ENCODE measurements at regions of chrX and their contacts with region 1.

Region 1: DNA sequence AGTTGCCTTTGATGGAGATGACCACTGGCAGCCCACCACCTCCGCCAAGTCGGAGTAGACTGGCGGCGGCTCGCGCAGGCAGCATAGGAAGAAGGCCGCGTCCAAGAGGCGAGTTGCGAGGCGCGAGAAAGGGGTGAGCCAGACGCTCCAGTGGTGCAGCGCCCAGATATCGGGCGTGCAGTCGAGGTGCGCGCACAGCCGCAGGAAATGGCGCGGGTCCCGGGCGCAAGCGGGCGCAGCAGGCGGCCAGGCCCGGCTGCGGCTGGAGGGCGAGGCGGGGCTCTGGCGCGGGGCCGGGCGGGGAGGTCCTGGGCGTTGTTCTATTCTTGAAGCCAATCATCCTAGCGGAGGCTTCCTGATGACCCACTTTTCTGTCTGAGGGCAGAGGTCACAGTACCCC is 13.2 kb upstream of the PGRMC1 start:
- DNase-seq: no peak
- ATAC-seq: no peak
- H3K4me3 Mint-ChIP-seq: no peak overlapping the region
- H3K27ac Mint-ChIP-seq: no peak overlapping the region
- H3K4me1 Mint-ChIP-seq: no peaks in the 10 kb centered on the region
- H3K27me3 Mint-ChIP-seq: peaks cover 11% of the 10 kb centered on the region

Region 2: GRCh38 chrX:119118780-119119395 is 104.0 kb before region 1 on chrX:
- CTCF ChIA-PET with region 1: interaction called, 10 read pairs
- POLR2A ChIA-PET with region 1: no interaction called
- intact Hi-C with region 1: loop called (anchors 1 to 5 kb)
- DNase-seq: peak; percentile 64
- ATAC-seq: peak; percentile 83
- H3K4me3 Mint-ChIP-seq: no peak overlapping the region
- H3K27ac Mint-ChIP-seq: no peak overlapping the region
- H3K4me1 Mint-ChIP-seq: no peaks in the 10 kb centered on the region
- H3K27me3 Mint-ChIP-seq: peaks cover 3% of the 10 kb centered on the region

Region 3: DNA sequence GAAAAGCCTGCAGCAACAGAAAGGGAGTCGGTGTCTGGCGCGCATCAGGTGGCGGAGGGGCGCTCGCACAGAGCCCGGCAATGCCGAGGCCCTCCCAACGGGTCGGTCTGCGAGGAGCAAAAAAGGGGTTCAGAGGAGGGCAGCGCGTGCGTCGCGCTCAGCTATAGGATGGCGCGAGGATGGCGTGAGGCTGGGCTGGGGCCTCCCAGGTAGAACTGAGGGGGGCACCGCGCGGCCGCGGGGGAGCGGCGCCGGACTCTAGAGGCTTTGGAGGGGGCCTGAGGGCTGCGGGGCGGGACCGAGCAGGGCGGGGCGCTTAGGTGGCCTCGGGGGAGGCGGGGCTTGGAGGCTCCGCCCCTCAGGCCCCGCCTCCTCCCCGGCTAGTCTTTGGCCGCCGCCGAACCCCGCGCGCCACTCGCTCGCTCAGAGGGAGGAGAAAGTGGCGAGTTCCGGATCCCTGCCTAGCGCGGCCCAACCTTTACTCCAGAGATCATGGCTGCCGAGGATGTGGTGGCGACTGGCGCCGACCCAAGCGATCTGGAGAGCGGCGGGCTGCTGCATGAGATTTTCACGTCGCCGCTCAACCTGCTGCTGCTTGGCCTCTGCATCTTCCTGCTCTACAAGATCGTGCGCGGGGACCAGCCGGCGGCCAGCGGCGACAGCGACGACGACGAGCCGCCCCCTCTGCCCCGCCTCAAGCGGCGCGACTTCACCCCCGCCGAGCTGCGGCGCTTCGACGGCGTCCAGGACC is 13.1 kb after region 1 on chrX and contains the start of gene PGRMC1:
- CTCF ChIA-PET with region 1: no interaction called
- POLR2A ChIA-PET with region 1: no interaction called
- intact Hi-C with region 1: no loop called
- DNase-seq: peak; percentile 86
- ATAC-seq: peak; percentile 94
- H3K4me3 Mint-ChIP-seq: peak within 1 kb of the TSS; percentile 89
- H3K27ac Mint-ChIP-seq: peak within 1 kb of the TSS; percentile 86
- H3K4me1 Mint-ChIP-seq: peaks cover 27% of the 10 kb centered on the region
- H3K27me3 Mint-ChIP-seq: peaks cover 3% of the 10 kb centered on the region
- total RNA-seq, gene PGRMC1: 30.8 to 37.3 TPM

Region 4: GRCh38 chrX:119247702-119248101 is 24.8 kb after region 1 on chrX:
- CTCF ChIA-PET with region 1: no interaction called
- POLR2A ChIA-PET with region 1: no interaction called
- intact Hi-C with region 1: loop called in 1 of 2 experiments (anchors 1 kb)
- DNase-seq: no peak
- ATAC-seq: peak; percentile 42
- H3K4me3 Mint-ChIP-seq: no peak overlapping the region
- H3K27ac Mint-ChIP-seq: no peak overlapping the region
- H3K4me1 Mint-ChIP-seq: peaks cover 8% of the 10 kb centered on the region
- H3K27me3 Mint-ChIP-seq: no peaks in the 10 kb centered on the region

Measured in activated CD4-positive, alpha-beta T cell treated with anti-CD3 and anti-CD28 coated beads for 36 hours (primary cell).